ENCODE measurements at regions of chr2 and their contacts with region 1.

Region 1: DNA sequence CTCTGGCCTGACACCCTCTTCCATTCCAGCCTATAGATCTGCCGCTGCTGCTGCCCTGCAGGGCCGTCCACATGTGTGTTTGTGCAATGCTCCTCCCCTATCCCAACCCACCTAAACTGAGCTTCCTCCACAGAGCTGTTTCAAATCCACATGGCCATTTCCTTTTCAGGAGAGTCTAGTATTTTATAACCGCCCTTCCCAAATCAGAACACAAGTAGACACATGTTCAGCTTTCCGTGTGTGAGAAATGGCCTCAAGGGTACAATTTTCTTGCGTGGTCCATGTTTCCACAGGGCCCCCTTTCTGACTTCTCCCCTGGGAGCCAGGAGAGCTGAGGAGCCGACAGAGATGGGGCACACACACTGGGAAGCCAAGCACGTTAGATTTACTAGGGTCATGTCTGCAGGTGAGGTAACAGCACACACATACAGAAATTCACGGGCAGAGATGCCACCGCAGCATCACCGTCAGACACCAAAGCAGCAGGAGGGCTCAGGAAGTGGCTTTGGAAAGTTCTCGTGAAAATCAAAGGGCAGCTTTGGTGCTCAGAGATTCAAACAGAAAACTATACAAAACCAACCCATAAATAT is 102.9 kb upstream of the TGFA start:
- DNase-seq: no peak
- ATAC-seq: no peak
- H3K4me3 ChIP-seq: no peak overlapping the region
- H3K27ac ChIP-seq: no peak overlapping the region
- H3K4me1 ChIP-seq: no peaks in the 10 kb centered on the region
- H3K27me3 ChIP-seq: no peaks in the 10 kb centered on the region

Region 2: DNA sequence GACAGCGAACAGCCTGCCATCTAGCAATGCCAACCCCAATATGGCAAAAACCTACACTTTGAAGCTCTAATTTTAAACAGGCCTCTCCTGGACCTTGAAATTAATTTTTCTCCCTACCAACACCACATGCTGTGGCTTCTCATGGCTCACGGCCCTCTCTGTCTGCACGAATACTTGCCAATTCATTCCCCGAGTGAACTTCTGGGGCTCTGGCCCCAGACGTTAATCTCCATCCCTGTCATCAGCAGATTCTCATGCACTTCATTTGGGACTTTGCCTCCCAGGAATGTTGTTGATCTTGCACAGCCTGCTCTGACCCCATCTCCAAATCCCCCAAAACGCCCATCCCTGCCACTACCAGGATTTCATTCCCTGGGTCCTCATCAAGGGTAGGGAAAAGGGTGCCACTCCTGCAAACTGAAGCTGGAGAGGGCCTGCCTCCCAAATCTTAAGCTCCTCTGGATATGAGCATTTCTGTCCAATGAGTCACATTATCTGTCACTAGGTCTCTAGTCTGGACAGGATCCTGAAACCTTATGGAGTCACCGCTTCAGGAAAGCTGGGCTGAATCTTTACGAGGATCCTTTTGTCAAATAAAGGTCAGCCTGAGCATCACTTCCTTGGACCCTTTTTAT is 123.5 kb after region 1 on chr2:
- intact Hi-C with region 1: loop called in 1 of 4 experiments (anchors 5 kb)
- DNase-seq: no peak
- ATAC-seq: no peak
- H3K4me3 ChIP-seq: no peak overlapping the region
- H3K27ac ChIP-seq: no peak overlapping the region
- H3K4me1 ChIP-seq: no peaks in the 10 kb centered on the region
- H3K27me3 ChIP-seq: no peaks in the 10 kb centered on the region

Region 3: GRCh38 chr2:71190656-71191569 is 534.4 kb after region 1 on chr2:
- intact Hi-C with region 1: no loop called
- DNase-seq: no peak
- ATAC-seq: peak; percentile 55 to 72
- H3K4me3 ChIP-seq: no peak overlapping the region
- H3K27ac ChIP-seq: no peak overlapping the region
- H3K4me1 ChIP-seq: peaks cover 1% of the 10 kb centered on the region
- H3K27me3 ChIP-seq: no peaks in the 10 kb centered on the region